T-cell (primary cell): ENCODE measurements at regions of chr7 and their contacts with region 1.

Region 1: DNA sequence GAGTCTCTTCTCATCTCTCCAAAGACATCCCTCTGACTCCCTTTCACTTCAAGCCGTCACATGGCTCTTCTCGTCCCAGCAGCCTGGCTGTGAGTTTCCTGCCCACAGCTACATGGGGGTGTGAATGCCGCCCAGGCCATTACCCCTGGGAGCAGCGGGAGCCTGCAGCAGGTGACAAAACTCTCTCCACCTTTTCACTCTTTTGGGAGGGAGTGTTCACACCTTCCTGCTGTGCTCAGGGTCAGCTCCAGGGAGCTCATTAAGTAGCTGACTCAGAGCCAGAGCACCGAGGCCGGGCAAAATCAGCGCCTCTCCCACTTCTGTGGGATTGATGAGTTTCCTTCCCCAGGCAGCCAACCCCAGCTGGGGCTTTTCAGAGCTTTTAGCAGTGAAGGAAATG is 271.3 kb downstream of the TYW1 start:
- DNase-seq: no peak
- ATAC-seq: no peak
- H3K4me3 ChIP-seq: no peak overlapping the region
- H3K4me3 Mint-ChIP-seq: no peak overlapping the region
- H3K27ac ChIP-seq: no peak overlapping the region
- H3K27ac Mint-ChIP-seq: no peak overlapping the region
- H3K4me1 ChIP-seq: no peaks in the 10 kb centered on the region
- H3K4me1 Mint-ChIP-seq: no peaks in the 10 kb centered on the region
- H3K27me3 ChIP-seq: no peaks in the 10 kb centered on the region
- H3K27me3 Mint-ChIP-seq: no peaks in the 10 kb centered on the region

Region 2: DNA sequence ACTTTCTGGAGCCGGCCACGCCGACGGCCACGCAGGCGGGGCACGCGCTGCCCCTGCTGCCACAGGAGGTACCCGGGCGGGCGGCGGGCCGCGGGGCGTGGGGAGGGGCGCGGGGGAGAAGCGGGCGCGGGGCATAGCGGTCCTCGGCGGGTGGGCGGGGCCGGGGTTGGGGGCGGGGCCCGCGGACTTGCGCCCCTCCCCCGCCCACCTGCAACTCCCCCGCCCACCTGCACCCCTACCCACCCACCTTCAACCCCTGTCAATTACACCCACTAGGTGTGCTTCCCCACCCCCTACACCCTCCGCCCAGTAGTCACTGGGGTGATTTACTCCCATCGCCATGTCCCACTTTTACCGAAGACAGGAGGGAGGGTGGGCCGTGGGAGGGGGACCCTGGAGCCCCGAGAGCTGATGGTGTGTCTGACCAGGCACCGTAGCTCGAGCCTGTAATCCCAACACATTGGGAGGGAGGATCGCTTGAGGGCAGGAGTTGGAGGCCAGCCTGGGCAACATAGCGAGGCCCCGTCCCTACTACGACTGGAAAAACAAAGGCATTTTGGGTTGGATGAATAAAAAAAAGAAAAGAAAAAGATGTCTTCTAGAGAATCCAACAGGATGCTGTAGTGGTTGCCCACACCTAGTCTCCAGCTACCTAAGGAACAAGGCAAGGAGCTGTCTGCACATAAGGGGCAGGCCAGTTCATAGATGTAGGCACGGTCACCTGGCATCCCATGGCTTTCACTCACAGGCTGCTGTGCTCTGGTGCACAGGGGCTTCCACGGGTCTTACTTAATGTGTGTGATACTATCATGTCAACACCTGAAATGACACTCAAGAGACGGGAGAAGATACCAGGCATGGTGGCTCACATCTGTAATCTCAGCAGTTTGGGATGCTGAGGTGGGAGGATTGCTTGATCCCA is 638.5 kb before region 1 on chr7:
- CTCF ChIA-PET with region 1: no interaction called
- POLR2A ChIA-PET with region 1: no interaction called
- DNase-seq: peak in 8 of 35 experiments; percentile 4 to 19 (median 8)
- ATAC-seq: peak; percentile 11 to 30 (median 23)
- H3K4me3 ChIP-seq: peak overlapping the region; percentile 57 to 62
- H3K4me3 Mint-ChIP-seq: peak overlapping the region; percentile 71 to 89 (median 75)
- H3K27ac ChIP-seq: peak overlapping the region; percentile 66
- H3K27ac Mint-ChIP-seq: peak overlapping the region; percentile 63 to 86
- H3K4me1 ChIP-seq: peaks cover 23 to 60% of the 10 kb centered on the region in 2 experiments
- H3K4me1 Mint-ChIP-seq: peaks cover 46 to 51% (median 51%) of the 10 kb centered on the region in 3 donors
- H3K27me3 ChIP-seq: no peaks in the 10 kb centered on the region
- H3K27me3 Mint-ChIP-seq: no peaks in the 10 kb centered on the region

Region 3: DNA sequence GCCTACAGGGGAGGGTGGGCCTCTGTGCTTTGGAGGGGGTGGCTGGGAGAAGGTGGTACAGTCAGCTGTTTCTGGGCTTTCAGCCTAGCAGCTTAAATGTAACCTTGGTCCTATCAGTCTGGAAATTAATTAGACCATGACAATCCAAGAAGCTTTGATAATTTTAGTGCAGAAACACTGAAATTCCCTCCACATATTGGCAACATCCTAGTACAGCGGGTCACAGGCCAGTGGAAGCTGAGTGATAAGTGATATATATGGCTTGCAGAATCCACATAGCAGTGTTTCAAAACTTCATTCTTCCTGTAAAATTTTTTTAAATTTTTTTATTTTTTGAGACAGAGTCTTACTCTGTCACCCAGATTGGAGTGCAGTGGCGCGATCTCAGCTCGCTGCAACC is 58.7 kb before region 1 on chr7:
- CTCF ChIA-PET with region 1: no interaction called
- POLR2A ChIA-PET with region 1: interaction called in 1 of 2 experiments, 11 read pairs
- DNase-seq: no peak
- ATAC-seq: no peak
- H3K4me3 ChIP-seq: no peak overlapping the region
- H3K4me3 Mint-ChIP-seq: no peak overlapping the region
- H3K27ac ChIP-seq: no peak overlapping the region
- H3K27ac Mint-ChIP-seq: no peak overlapping the region
- H3K4me1 ChIP-seq: no peaks in the 10 kb centered on the region
- H3K4me1 Mint-ChIP-seq: peaks cover 0 to under 1% (median 0%) of the 10 kb centered on the region in 3 donors
- H3K27me3 ChIP-seq: no peaks in the 10 kb centered on the region
- H3K27me3 Mint-ChIP-seq: no peaks in the 10 kb centered on the region